Stomach (tissue), 19 donors: ENCODE measurements at regions of chr13 and their contacts with region 1.

Region 1: DNA sequence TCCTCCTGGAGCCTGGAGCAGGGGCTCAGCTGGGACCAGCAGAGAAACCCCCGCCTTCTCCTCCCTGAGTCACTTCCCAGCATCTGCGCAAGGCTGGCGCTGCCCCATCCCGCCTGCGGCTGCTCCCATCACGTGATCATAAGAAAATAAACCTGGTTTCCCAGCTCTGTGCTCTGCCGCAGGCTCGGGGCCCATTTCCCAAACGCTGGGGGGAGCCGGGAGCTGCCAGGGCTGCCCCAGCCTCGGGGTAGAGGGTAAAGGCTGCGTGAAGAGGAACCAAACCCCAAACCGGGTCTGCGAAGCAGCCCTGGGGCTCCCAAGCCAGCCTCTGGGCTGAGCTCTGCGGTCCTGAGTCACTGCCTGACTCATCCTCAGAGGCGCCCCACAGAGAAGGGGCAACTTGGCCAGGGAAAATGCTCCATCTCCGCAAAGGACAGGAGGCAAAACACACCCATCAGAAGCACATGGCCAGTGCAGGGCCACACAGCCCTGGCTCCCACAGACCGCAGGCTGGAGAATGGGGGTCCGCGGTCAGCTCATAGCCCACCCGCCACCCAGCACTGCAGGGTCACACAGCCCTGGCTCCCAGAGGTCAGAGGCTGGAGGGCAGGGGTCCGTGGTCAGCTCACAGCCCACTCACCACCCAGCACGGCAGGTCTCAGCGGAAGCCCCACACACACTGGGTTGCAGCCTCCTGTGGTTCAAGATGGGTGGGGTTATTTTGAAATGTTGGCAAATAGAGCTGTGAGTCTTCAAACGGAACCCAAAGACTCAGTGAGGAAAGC is 67.1 kb downstream of the RASA3 start:
- DNase-seq: peak; percentile 79 to 94
- H3K4me3 ChIP-seq: peak overlapping the region; percentile 34 to 41 (median 40)
- H3K27ac ChIP-seq: peak overlapping the region; percentile 93 to 99 (median 96)
- H3K4me1 ChIP-seq: peaks cover 52 to 83% (median 62%) of the 10 kb centered on the region in 4 donors
- H3K27me3 ChIP-seq: no peaks in the 10 kb centered on the region
- CTCF ChIP-seq: no peak
- EP300 ChIP-seq: peak; percentile 35
- POLR2A ChIP-seq: no peak

Region 2: DNA sequence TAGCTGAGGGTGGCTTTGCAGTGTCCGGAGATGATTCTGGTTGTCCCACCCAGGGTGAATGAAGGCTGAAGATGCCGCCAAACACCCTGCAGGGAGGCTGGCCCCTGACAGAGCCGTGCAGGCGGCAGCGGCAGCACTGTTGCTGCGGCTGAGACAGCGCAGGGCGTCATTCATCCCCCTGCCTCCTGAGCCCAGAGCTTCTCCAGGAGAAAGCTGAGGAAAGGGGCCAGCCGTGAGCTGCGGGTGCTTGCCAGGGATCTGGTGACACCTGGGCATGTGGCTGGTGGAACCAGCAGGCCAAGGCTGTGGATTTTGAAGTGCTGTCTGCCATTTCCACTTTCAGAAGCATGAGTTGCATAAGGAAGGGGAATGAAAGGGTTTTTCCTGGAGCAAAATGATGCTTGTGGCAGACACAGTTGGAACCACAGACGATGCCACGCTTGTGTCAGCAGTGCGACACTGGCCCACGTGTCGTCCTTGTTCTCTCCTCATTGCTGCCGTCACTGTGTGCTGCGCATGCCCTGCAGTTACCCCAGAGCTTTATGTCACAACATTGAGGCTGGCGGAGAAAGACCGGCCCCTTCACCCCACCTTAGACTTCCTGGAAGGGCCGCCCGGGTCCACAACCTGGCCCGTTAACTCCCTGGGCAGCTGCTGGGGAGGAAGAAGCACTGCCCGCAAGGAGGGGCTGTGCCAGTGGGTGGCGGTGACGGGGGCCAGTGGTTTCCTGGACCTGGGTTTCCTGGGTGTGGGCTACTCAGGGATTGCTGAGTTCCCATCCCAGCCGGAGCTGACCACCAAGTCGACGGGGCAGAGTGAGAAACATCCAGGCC is 458.1 kb before region 1 on chr13:
- intact Hi-C with region 1: no loop called
- DNase-seq: peak in 1 of 2 donors; percentile 28
- H3K4me3 ChIP-seq: no peak overlapping the region
- H3K27ac ChIP-seq: peak overlapping the region in 2 of 5 donors; percentile 8 to 68
- H3K4me1 ChIP-seq: peaks cover 0 to 19% (median 7%) of the 10 kb centered on the region in 4 donors
- H3K27me3 ChIP-seq: no peaks in the 10 kb centered on the region
- CTCF ChIP-seq: no peak
- EP300 ChIP-seq: no peak
- POLR2A ChIP-seq: no peak

Region 3: GRCh38 chr13:114128624-114129522 is 63.5 kb after region 1 on chr13:
- intact Hi-C with region 1: loop called (anchors 10 kb)
- DNase-seq: peak; percentile 67 to 88
- H3K4me3 ChIP-seq: peak overlapping the region; percentile 16 to 31 (median 22)
- H3K27ac ChIP-seq: peak overlapping the region; percentile 32 to 90 (median 86)
- H3K4me1 ChIP-seq: peaks cover 36 to 71% (median 56%) of the 10 kb centered on the region in 4 donors
- H3K27me3 ChIP-seq: peaks cover 0 to 12% (median 0%) of the 10 kb centered on the region in 3 donors
- CTCF ChIP-seq: no peak
- EP300 ChIP-seq: no peak
- POLR2A ChIP-seq: no peak